Naive thymus-derived CD4-positive, alpha-beta T cell (primary cell): ENCODE measurements at regions of chr3 and their contacts with region 1.

Region 1: DNA sequence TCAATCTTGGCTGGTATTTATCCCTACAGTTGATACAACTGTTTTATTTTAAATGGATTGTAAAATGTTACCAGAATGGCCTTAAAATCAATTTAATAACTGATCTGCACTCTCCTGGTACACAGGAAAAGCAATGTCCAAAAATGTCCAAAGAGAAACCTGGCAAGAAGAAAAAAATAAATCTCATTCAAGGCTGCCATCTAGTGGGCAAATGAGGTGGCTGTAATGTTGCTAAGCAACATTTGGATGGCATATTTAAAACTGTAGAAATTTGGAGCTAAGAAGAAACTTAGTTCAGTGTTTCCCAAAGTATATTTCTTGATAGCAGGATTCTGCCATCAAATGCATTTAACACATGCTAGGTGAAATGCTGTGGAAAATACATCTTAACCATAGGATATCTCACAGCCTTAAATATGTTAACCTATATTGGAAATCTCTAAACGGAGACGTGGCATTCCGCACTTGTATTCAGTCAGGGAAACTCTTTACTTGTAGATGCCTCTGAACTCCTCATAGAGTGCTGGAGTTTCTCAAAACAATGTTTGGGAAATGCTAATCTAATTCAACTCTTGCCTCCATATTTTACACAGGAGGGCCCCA is 216.8 kb downstream of the ERC2 start:
- DNase-seq: peak in 2 of 9 donors; percentile 10 to 11
- ATAC-seq: no peak
- H3K4me3 ChIP-seq: no peak overlapping the region
- H3K4me3 Mint-ChIP-seq: no peak overlapping the region
- H3K27ac ChIP-seq: no peak overlapping the region
- H3K27ac Mint-ChIP-seq: no peak overlapping the region
- H3K4me1 ChIP-seq: no peaks in the 10 kb centered on the region
- H3K4me1 Mint-ChIP-seq: no peaks in the 10 kb centered on the region
- H3K27me3 ChIP-seq: no peaks in the 10 kb centered on the region
- H3K27me3 Mint-ChIP-seq: peaks cover 0 to 22% (median 7%) of the 10 kb centered on the region in 5 donors

Region 2: DNA sequence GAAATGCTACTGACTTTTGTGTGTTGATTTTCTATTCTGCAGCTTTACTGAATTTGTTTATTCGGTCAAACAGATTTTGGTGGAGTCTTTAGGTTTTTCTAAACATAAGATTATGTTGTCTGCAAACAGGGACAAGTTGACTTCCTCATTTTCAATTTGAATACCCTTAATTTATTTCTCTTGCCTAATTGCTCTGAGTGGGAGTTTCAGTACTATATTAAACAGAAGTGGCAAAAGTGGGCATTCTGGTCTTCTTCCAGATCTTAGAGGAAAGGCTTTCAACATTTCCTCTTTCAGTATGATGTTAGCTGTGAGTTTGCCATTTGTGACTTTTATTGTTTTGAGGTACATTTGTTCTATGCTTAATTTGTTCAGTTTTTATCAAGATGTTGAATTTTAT is 1032.9 kb before region 1 on chr3:
- CTCF ChIA-PET with region 1: no interaction called
- POLR2A ChIA-PET with region 1: no interaction called
- intact Hi-C with region 1: no loop called
- DNase-seq: no peak
- ATAC-seq: no peak
- H3K4me3 ChIP-seq: no peak overlapping the region
- H3K4me3 Mint-ChIP-seq: no peak overlapping the region
- H3K27ac ChIP-seq: no peak overlapping the region
- H3K27ac Mint-ChIP-seq: no peak overlapping the region
- H3K4me1 ChIP-seq: no peaks in the 10 kb centered on the region
- H3K4me1 Mint-ChIP-seq: no peaks in the 10 kb centered on the region
- H3K27me3 ChIP-seq: no peaks in the 10 kb centered on the region
- H3K27me3 Mint-ChIP-seq: peaks cover 0 to 4% (median 0%) of the 10 kb centered on the region in 5 donors

Region 3: GRCh38 chr3:55434789-55435188 is 816.7 kb before region 1 on chr3:
- CTCF ChIA-PET with region 1: no interaction called
- POLR2A ChIA-PET with region 1: no interaction called
- intact Hi-C with region 1: loop called in 1 of 2 experiments (anchors 2 kb)
- DNase-seq: no peak
- ATAC-seq: no peak
- H3K4me3 ChIP-seq: no peak overlapping the region
- H3K4me3 Mint-ChIP-seq: no peak overlapping the region
- H3K27ac ChIP-seq: no peak overlapping the region
- H3K27ac Mint-ChIP-seq: no peak overlapping the region
- H3K4me1 ChIP-seq: no peaks in the 10 kb centered on the region
- H3K4me1 Mint-ChIP-seq: no peaks in the 10 kb centered on the region
- H3K27me3 ChIP-seq: no peaks in the 10 kb centered on the region
- H3K27me3 Mint-ChIP-seq: peaks cover 0 to 5% (median 0%) of the 10 kb centered on the region in 5 donors

Region 4: DNA sequence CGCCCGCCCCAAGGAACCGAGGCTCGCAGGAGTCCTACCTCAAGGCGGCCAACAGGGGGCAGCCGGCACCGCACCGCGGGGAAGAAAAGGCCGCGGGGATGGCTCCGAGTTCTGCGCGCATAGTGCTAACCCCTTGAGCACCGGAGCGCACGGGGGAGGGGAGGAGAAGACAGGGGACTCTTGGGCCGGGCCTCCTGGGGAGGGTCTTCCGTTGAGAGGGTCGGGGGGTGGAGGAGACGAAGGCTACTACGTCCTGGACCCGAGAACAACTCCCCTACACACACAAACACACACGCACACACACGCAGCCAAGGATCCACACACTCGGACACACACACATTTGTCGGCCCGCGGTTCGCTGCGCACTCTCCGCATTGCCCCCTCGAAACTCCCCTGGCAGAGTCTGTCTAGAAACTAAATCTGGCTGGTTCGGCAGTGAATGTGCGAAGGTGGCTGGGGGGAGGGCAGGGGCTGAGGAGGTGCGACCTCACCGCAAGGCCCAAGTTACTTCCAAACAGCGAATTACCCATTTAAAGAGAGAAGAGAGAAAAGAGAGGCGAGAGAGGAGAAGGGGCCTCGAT is 766.1 kb before region 1 on chr3:
- CTCF ChIA-PET with region 1: no interaction called
- POLR2A ChIA-PET with region 1: no interaction called
- intact Hi-C with region 1: loop called in 1 of 2 experiments (anchors 2 kb)
- DNase-seq: peak in 2 of 9 donors; percentile 19 to 52
- ATAC-seq: peak; percentile 40
- H3K4me3 ChIP-seq: no peak overlapping the region
- H3K4me3 Mint-ChIP-seq: peak overlapping the region in 7 of 10 donors; percentile 16 to 60 (median 42)
- H3K27ac ChIP-seq: no peak overlapping the region
- H3K27ac Mint-ChIP-seq: peak overlapping the region in 1 of 9 donors; percentile 65
- H3K4me1 ChIP-seq: no peaks in the 10 kb centered on the region
- H3K4me1 Mint-ChIP-seq: peaks cover 0 to 51% (median 26%) of the 10 kb centered on the region in 7 donors
- H3K27me3 ChIP-seq: peaks cover 0 to 7% of the 10 kb centered on the region in 2 donors
- H3K27me3 Mint-ChIP-seq: peaks cover 61 to 90% (median 79%) of the 10 kb centered on the region in 5 donors

Region 5: GRCh38 chr3:56144805-56145204 is 106.6 kb before region 1 on chr3:
- CTCF ChIA-PET with region 1: no interaction called
- POLR2A ChIA-PET with region 1: no interaction called
- intact Hi-C with region 1: no loop called
- DNase-seq: no peak
- ATAC-seq: no peak
- H3K4me3 ChIP-seq: no peak overlapping the region
- H3K4me3 Mint-ChIP-seq: no peak overlapping the region
- H3K27ac ChIP-seq: no peak overlapping the region
- H3K27ac Mint-ChIP-seq: no peak overlapping the region
- H3K4me1 ChIP-seq: no peaks in the 10 kb centered on the region
- H3K4me1 Mint-ChIP-seq: peaks cover 0 to 2% (median 0%) of the 10 kb centered on the region in 7 donors
- H3K27me3 ChIP-seq: no peaks in the 10 kb centered on the region
- H3K27me3 Mint-ChIP-seq: peaks cover 0 to 27% (median 4%) of the 10 kb centered on the region in 5 donors

Region 6: DNA sequence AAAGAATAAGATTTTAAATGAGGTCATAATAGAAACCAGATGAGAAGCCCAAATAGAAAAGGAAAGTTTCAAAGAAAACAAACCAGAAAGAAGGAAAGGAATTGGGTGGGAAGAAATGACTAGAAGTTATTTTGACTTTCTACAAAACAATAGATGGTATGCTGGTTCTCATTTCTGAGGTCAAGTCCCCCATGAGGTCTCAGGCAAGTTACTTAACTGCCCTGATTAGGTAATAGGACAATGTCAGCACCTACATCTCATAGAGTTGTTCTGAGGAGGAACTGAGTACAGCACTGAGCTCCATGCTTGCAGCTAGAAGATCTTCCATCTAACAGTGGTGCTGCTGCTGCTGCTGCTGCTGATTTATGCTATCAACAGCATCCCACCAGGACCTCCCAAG is 30.9 kb after region 1 on chr3:
- CTCF ChIA-PET with region 1: no interaction called
- POLR2A ChIA-PET with region 1: no interaction called
- intact Hi-C with region 1: no loop called
- DNase-seq: no peak
- ATAC-seq: no peak
- H3K4me3 ChIP-seq: no peak overlapping the region
- H3K4me3 Mint-ChIP-seq: no peak overlapping the region
- H3K27ac ChIP-seq: no peak overlapping the region
- H3K27ac Mint-ChIP-seq: no peak overlapping the region
- H3K4me1 ChIP-seq: no peaks in the 10 kb centered on the region
- H3K4me1 Mint-ChIP-seq: no peaks in the 10 kb centered on the region
- H3K27me3 ChIP-seq: no peaks in the 10 kb centered on the region
- H3K27me3 Mint-ChIP-seq: peaks cover 18 to 40% (median 22%) of the 10 kb centered on the region in 5 donors